Endothelial cell of umbilical vein (primary cell): ENCODE measurements at regions of chr9 and their contacts with region 1.

Region 1: DNA sequence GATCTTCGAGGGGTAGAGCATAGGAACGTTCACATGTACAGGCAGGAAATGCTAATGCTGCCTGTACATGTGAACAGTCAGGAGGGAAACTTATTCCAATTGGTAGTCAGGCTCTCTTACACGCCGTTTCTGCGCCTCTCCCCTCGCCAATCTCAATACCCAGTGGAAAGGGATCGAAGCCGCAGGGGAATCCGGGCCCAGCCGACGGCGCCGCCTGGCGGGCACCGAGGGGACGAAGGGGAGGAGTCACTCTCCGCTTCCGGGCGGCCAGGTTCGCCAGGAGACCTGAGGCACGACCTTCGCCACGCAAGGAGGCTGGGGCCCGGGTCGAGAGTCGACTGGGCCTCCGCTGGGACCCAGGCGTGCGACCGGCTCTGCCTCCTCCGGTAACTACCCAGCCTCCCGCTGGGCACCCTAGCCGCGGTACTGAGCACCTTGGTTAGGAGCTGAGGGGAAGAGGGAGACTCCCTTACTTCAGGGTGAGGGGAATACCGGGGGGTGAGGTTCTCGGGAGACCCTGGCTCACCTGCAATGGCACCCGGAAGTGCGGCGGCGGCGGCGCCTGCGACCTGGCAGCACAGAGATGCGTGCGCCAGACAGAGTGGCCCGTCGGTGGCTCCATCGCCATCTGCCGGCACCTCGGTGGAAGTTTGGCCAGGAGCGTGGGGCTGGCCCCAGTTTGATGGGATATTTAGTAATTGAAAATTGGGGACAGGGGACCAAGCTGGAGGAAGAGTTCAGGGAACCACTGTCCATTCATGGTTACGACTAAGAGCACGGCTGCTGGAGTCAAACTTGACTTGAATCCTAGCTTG is at the start of gene PIGO:
- DNase-seq: peak; percentile 78
- H3K4me3 ChIP-seq: peak within 1 kb of the TSS; percentile 69 to 93 (median 74)
- H3K27ac ChIP-seq: peak within 1 kb of the TSS; percentile 85
- H3K4me1 ChIP-seq: peaks cover 2% of the 10 kb centered on the region
- H3K27me3 ChIP-seq: no peaks in the 10 kb centered on the region
- CTCF ChIP-seq: peak; percentile 77 to 99
- POLR2A ChIP-seq: peak; percentile 46
- total RNA-seq, gene PIGO: 17.7 and 23.5 TPM in 2 replicates

Region 2: DNA sequence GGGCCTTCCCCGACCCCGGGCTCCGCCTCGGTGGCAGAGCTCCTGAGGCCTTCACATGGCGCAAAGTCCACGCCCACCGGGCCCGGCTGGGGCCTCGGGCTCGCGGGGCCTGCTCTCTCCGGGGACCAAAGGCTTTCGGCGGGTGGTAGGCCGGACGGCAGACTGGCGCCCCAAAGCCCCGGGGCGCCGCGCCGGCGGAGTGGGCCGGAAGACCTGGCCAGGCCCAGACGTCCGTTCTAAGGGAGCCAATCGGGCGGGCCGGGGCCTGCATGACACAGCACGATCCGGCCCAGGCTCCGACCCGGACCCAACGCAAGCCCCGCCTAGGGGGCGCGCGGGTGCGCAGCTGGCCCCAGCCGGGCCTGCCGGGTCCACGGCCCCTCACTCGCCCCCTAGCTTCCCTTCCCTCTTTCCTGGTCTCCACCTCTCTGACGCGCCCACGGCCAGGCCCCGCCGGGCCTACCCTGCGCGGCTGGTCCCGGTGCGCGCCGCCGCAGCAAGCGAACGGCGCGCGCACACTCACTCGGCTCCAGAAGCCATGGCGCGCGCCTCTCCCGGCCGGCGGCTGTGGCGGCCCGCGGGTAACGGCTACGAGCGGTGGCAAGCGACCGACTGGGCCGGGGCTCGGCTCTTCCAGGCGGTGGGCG is 24.3 kb before region 1 on chr9:
- CTCF ChIA-PET with region 1: interaction called, 12 read pairs
- POLR2A ChIA-PET with region 1: interaction called, 4 read pairs
- dilution Hi-C with region 1: no loop called
- intact Hi-C with region 1: loop called (anchors 1 kb)
- DNase-seq: peak; percentile 85
- H3K4me3 ChIP-seq: peak overlapping the region; percentile 79 to 97 (median 96)
- H3K27ac ChIP-seq: peak overlapping the region; percentile 95
- H3K4me1 ChIP-seq: peaks cover 29% of the 10 kb centered on the region
- H3K27me3 ChIP-seq: no peaks in the 10 kb centered on the region
- CTCF ChIP-seq: peak; percentile 25 to 65
- POLR2A ChIP-seq: peak; percentile 51

Region 3: DNA sequence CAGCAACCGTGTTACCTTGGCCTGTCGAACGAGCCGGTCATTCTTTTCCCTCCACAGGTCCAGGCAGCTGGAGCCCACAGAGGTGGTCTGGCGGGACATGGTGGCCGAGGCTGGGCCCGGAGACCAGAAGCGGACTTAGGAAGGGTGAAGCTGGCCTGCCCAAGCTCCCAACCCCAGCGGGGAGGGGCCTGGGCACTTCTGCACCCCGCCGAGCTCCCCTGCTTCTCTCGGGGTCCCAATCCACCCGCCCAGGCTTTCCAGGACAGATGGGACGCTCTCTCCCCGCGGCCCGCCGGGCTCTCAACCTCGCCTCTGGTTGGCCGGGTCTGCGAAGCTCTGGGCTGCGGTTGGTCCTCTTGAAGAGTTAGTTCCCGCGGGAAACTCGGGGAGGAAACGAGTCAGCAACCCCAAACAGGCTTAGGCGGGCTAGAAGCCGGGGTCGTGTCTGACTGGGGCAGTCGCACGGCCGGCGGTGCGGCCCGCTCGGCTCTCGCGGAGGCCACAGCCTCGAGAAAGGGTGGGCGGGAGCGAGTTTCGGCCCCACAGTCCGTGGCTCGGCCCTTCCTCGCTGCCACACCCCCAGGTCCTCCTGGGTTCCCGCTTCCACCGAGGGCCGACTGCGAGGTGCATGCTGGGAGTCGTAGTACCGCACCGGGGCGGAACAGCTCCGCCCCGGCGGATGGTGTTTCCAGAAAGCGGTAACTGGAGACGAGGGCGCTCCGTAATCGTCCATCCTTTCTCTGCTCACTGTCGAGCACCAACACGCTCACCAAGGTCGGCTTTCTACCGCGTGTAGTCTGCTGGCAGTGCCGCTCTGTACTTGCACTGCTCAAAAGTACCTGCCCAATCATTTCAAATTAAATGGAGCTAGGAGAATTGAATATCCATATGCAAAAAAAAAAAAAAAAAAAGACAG is 16.6 kb before region 1 on chr9 and contains the start of gene FANCG:
- CTCF ChIA-PET with region 1: interaction called, 10 read pairs
- POLR2A ChIA-PET with region 1: interaction called, 3 read pairs
- dilution Hi-C with region 1: no loop called
- intact Hi-C with region 1: loop called (anchors 1 kb)
- DNase-seq: peak; percentile 95
- H3K4me3 ChIP-seq: peak within 1 kb of the TSS; percentile 64 to 79 (median 66)
- H3K27ac ChIP-seq: peak within 1 kb of the TSS; percentile 57
- H3K4me1 ChIP-seq: peaks cover 16% of the 10 kb centered on the region
- H3K27me3 ChIP-seq: no peaks in the 10 kb centered on the region
- CTCF ChIP-seq: no peak
- POLR2A ChIP-seq: peak; percentile 76
- total RNA-seq, gene FANCG: 50.0 and 58.0 TPM in 2 replicates